Left lung (tissue), 14 donors: ENCODE measurements at regions of chr1 and their contacts with region 1.

Region 1: GRCh38 chr1:68116643-68117235 is 66.3 kb upstream of the DIRAS3 start:
- DNase-seq: peak in 2 of 4 donors; percentile 50 to 68
- ATAC-seq: peak; percentile 44
- H3K4me3 ChIP-seq: no peak overlapping the region
- H3K27ac ChIP-seq: no peak overlapping the region
- H3K4me1 ChIP-seq: peaks cover 0 to 5% of the 10 kb centered on the region in 2 donors
- H3K27me3 ChIP-seq: no peaks in the 10 kb centered on the region
- CTCF ChIP-seq: peak; percentile 74 to 78

Region 2: GRCh38 chr1:67853704-67854103 is 263.0 kb before region 1 on chr1:
- intact Hi-C with region 1: loop called in 1 of 2 experiments (anchors 10 kb)
- DNase-seq: peak in 3 of 4 donors; percentile 50 to 76 (median 56)
- ATAC-seq: peak; percentile 87
- H3K4me3 ChIP-seq: no peak overlapping the region
- H3K27ac ChIP-seq: no peak overlapping the region
- H3K4me1 ChIP-seq: peaks cover 0 to 11% of the 10 kb centered on the region in 2 donors
- H3K27me3 ChIP-seq: no peaks in the 10 kb centered on the region
- CTCF ChIP-seq: peak; percentile 67 to 83

Region 3: DNA sequence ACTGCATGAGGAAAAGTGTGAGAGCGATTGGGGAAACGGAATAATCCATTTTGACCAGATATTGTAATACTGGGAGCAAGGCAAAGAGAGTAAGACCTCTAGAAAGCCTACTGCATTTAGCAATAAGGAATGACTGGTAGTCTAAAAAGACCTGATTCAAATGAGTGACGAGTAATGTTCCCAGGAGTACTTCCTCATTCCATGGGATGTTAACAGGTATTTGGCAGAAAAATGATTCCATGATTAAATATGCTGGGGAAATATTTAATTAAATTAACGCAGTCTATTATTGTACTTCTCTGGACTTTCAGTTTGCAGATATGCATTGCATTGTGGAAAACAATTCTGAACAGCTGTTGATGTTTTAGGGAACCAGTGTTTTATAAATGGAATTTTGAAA is 227.5 kb after region 1 on chr1:
- intact Hi-C with region 1: loop called in 1 of 2 experiments (anchors 5 kb)
- DNase-seq: no peak
- ATAC-seq: peak; percentile 63
- H3K4me3 ChIP-seq: no peak overlapping the region
- H3K27ac ChIP-seq: no peak overlapping the region
- H3K4me1 ChIP-seq: peaks cover 0 to 8% of the 10 kb centered on the region in 2 donors
- H3K27me3 ChIP-seq: no peaks in the 10 kb centered on the region
- CTCF ChIP-seq: no peak

Region 4: DNA sequence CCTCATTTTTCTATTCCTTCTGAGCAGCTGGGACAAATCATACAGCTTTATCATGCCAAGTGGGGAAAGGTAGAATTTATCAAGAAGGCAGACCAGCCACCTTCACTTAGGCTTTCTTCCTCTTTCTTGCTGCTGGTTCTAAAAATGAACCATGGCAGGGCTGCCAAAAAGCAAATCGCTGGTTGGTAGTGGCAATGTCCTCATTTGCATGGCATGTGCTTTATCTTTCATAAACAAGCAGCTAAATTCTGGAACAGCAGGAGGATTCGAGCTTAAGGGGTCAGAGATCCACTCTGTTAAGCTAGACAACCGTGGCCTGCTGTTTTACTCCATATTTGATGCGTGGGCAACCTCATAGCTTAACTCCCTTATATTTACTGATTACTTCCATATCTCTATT is 241.7 kb after region 1 on chr1:
- intact Hi-C with region 1: loop called in 1 of 2 experiments (anchors 10 kb)
- DNase-seq: no peak
- ATAC-seq: no peak
- H3K4me3 ChIP-seq: no peak overlapping the region
- H3K27ac ChIP-seq: no peak overlapping the region
- H3K4me1 ChIP-seq: peaks cover 0 to 21% of the 10 kb centered on the region in 2 donors
- H3K27me3 ChIP-seq: no peaks in the 10 kb centered on the region
- CTCF ChIP-seq: no peak